HCT116 (cell line): ENCODE measurements at regions of chr12 and their contacts with region 1.

Region 1: GRCh38 chr12:111313833-111314259 is 55.0 kb downstream of the PHETA1 start:
- DNase-seq: peak; percentile 63
- ATAC-seq: peak; percentile 92
- H3K4me3 ChIP-seq: no peak overlapping the region
- H3K27ac ChIP-seq: no peak overlapping the region
- H3K4me1 ChIP-seq: peaks cover 5 to 17% of the 10 kb centered on the region in 2 experiments
- H3K27me3 ChIP-seq: no peaks in the 10 kb centered on the region
- CTCF ChIP-seq: peak; percentile 92 to 98 (median 94)
- POLR2A ChIP-seq: no peak
- RAD21 ChIP-seq: peak; percentile 93

Region 2: DNA sequence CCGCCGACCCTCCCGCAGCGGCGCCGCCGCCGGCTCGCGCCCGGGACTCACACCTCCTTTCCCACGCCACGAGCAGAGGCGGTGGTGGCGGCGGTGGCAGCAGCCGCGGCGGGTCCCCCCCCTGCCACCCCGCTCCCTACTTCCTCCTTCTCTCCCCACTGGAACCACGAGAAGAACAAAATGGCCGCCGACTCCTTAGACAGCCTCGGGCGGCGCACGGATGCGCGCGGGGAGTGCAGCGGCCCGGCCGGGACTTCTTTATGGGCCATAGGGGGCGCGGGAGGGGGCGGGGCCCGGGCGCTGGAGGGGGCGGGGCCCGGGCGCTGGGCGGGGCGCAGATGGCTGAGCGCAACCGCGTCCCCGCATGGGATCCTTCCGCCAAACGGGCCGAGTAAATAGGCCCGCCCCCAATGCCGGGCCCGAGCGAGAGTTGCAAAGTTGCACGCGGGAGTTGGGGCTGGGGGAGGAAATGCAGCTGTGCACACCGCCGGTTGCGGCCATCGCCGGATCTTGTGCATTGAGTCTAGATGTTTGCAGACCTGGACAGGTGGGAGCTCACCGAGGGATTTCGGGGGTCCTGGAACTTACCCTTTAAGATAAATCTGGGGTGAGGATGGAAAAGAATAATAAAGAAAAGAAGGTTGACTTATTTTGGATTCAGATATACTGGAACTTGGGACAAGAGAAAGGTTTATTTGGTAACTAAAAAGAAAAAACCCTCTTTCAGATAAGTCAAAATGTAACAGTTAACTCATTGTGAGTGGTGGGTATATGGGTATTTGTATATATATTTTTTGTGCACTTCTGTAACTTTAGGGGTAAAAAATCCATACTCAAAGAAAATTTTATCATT is 570.9 kb before region 1 on chr12 and contains the start of gene PPP1CC:
- CTCF ChIA-PET with region 1: no interaction called
- POLR2A ChIA-PET with region 1: no interaction called
- RAD21 ChIA-PET with region 1: no interaction called
- intact Hi-C with region 1: loop called (anchors 10 kb)
- DNase-seq: peak; percentile 79
- ATAC-seq: peak; percentile 79
- H3K4me3 ChIP-seq: peak within 1 kb of the TSS; percentile 80 to 89
- H3K27ac ChIP-seq: peak within 1 kb of the TSS; percentile 72
- H3K4me1 ChIP-seq: peaks cover 22 to 45% of the 10 kb centered on the region in 2 experiments
- H3K27me3 ChIP-seq: no peaks in the 10 kb centered on the region
- CTCF ChIP-seq: no peak
- POLR2A ChIP-seq: peak; percentile 53
- RAD21 ChIP-seq: no peak
- total RNA-seq, gene PPP1CC: 248 TPM

Region 3: GRCh38 chr12:110896559-110896958 is 417.3 kb before region 1 on chr12:
- CTCF ChIA-PET with region 1: interaction called, 3 read pairs
- POLR2A ChIA-PET with region 1: no interaction called
- RAD21 ChIA-PET with region 1: no interaction called
- intact Hi-C with region 1: loop called (anchors 1 kb)
- DNase-seq: no peak
- ATAC-seq: no peak
- H3K4me3 ChIP-seq: no peak overlapping the region
- H3K27ac ChIP-seq: no peak overlapping the region
- H3K4me1 ChIP-seq: peaks cover 0 to 37% of the 10 kb centered on the region in 2 experiments; a peak in 2 of 4 replicates
- H3K27me3 ChIP-seq: no peaks in the 10 kb centered on the region
- CTCF ChIP-seq: no peak
- POLR2A ChIP-seq: no peak
- RAD21 ChIP-seq: no peak

Region 4: GRCh38 chr12:110937104-110937641 is 376.7 kb before region 1 on chr12:
- CTCF ChIA-PET with region 1: no interaction called
- POLR2A ChIA-PET with region 1: no interaction called
- RAD21 ChIA-PET with region 1: no interaction called
- intact Hi-C with region 1: loop called (anchors 1 kb)
- DNase-seq: peak; percentile 57
- ATAC-seq: peak; percentile 61
- H3K4me3 ChIP-seq: peak overlapping the region; percentile 23 to 41
- H3K27ac ChIP-seq: no peak overlapping the region
- H3K4me1 ChIP-seq: peaks cover 25 to 53% of the 10 kb centered on the region in 2 experiments
- H3K27me3 ChIP-seq: no peaks in the 10 kb centered on the region
- CTCF ChIP-seq: peak; percentile 68 to 93 (median 90)
- POLR2A ChIP-seq: no peak
- RAD21 ChIP-seq: peak; percentile 85

Region 5: GRCh38 chr12:111024205-111024801 is 289.5 kb before region 1 on chr12:
- CTCF ChIA-PET with region 1: interaction called, 3 read pairs
- POLR2A ChIA-PET with region 1: no interaction called
- RAD21 ChIA-PET with region 1: no interaction called
- intact Hi-C with region 1: loop called (anchors 1 kb)
- DNase-seq: peak; percentile 52
- ATAC-seq: peak; percentile 99
- H3K4me3 ChIP-seq: no peak overlapping the region
- H3K27ac ChIP-seq: no peak overlapping the region
- H3K4me1 ChIP-seq: peaks cover 0 to 4% of the 10 kb centered on the region in 2 experiments; a peak in 1 of 4 replicates
- H3K27me3 ChIP-seq: 0 out of 2 replicates have a peak, but pooled peaks cover 3% of the 10 kb centered on the region
- CTCF ChIP-seq: peak; percentile 87 to 96 (median 92)
- POLR2A ChIP-seq: no peak
- RAD21 ChIP-seq: peak; percentile 96

Region 6: DNA sequence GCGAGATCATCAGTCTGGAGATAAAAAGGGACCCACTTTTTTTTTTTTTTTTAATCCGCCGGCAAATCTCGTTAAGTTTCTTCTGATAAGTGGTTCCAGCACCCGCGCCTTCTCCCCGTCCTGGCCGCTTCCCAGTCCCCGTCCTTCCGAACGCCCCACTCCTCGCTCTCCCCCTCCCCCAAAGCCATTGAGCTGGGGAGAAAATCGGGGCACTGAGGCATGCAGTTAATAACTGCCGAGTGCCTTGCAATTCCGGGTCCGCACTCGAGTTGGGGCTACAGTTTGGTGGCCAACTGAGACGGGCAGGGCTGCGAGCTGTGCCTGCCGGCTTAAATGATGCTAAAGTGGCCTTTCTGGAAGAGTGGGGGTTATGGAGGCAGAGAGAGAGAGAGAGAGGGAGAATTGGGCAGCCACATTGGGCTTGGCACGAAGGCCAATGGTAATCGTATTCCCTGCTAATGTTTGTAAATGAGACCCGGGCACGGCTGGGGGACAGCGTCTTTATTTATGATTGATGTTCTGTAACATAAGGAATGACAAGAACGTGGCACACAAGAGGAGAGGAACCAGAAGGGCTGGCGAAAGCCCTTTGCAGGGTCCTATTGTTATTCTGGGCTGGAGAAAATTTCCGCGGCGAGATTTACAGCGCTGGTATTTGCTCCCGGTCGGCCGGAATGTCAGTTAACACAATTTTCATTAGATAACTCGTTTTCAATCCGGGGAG is 278.1 kb before region 1 on chr12:
- CTCF ChIA-PET with region 1: no interaction called
- POLR2A ChIA-PET with region 1: no interaction called
- RAD21 ChIA-PET with region 1: interaction called in 1 of 2 experiments, 11 read pairs
- intact Hi-C with region 1: no loop called
- DNase-seq: no peak
- ATAC-seq: no peak
- H3K4me3 ChIP-seq: no peak overlapping the region
- H3K27ac ChIP-seq: no peak overlapping the region
- H3K4me1 ChIP-seq: peaks cover 0 to under 1% of the 10 kb centered on the region in 2 experiments; a peak in 1 of 4 replicates
- H3K27me3 ChIP-seq: 0 out of 2 replicates have a peak, but pooled peaks cover 7% of the 10 kb centered on the region
- CTCF ChIP-seq: no peak
- POLR2A ChIP-seq: no peak
- RAD21 ChIP-seq: no peak

Region 7: DNA sequence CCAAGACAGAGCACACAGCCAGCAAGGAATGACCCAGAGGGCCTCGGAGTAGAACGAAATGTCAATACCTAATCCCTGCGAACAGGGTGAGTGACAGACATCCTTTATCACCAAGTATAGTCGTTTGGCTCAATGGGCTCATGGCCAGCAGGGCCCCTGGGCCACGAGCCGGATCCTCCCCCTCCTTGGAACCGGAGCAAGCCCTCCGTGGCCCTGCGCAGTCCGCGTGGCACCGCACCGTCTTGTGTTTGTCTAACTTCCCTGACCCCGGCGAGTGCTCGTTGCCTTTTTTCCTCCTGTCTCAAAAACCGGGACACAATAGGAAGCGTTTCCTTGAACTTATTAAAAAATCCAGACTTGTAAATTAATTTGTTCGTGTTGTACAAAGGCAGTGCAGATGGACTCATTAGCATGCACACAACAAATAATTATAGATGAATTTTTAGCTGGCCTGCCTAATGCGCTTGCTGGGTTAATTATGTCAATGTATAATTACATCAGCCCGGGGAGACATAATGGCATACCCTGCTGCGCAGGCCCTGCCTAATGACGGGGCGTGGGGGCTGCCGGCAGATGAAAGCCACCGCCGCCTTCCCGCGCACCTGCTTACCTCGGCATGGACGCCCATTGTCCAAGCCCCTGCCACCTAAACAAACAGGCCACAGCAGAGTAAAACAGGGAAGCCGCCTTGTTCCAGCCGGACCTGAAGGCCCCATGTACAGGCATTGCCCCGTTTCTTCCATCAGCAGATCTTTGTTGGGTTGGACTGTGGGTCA is 26.5 kb before region 1 on chr12:
- CTCF ChIA-PET with region 1: no interaction called
- POLR2A ChIA-PET with region 1: no interaction called
- RAD21 ChIA-PET with region 1: no interaction called
- intact Hi-C with region 1: no loop called
- DNase-seq: no peak
- ATAC-seq: no peak
- H3K4me3 ChIP-seq: no peak overlapping the region
- H3K27ac ChIP-seq: no peak overlapping the region
- H3K4me1 ChIP-seq: no peaks in the 10 kb centered on the region
- H3K27me3 ChIP-seq: no peaks in the 10 kb centered on the region
- CTCF ChIP-seq: no peak
- POLR2A ChIP-seq: no peak
- RAD21 ChIP-seq: no peak

Region 8: DNA sequence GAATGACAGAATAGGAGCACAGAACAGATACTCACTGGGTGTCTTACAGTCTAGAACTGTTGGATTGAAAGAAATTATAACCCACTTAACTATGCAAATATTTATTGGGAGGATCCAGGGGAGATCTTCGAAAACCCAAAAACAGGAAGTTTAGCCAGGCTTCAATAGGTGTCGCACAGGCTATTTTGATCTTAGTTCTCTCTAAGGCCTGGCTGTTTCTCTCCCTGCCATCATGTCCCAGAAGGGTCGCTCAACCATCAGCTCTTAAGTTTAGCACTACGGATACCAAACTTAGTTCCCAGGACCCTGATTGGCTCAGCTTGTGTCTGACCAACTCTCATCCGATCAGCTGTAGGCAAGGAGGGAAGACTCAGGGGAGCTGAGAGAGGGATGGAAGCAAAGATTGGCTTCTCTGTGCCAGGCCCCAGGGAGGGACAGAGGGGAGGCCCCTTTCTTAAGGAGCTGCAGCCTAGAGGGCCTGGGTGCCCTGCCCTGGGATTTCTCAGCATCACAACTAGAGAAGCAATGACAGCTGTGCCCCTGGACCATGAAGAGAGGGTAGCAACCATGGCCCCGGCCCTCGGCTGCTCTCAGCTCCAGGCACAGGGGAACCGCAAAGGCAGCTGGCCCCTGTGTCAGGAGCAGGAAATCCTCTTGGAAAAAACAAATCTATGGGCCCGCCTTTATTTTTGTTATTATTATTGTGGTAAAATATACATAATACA is 41.5 kb after region 1 on chr12:
- CTCF ChIA-PET with region 1: no interaction called
- POLR2A ChIA-PET with region 1: no interaction called
- RAD21 ChIA-PET with region 1: no interaction called
- intact Hi-C with region 1: no loop called
- DNase-seq: no peak
- ATAC-seq: no peak
- H3K4me3 ChIP-seq: no peak overlapping the region
- H3K27ac ChIP-seq: no peak overlapping the region
- H3K4me1 ChIP-seq: no peaks in the 10 kb centered on the region
- H3K27me3 ChIP-seq: no peaks in the 10 kb centered on the region
- CTCF ChIP-seq: no peak
- POLR2A ChIP-seq: no peak
- RAD21 ChIP-seq: no peak